Body of pancreas (tissue), 4 donors: ENCODE measurements at regions of chr5 and their contacts with region 1.

Region 1: GRCh38 chr5:78899922-78900362 is 85.2 kb downstream of the ARSB start:
- DNase-seq: peak; percentile 67 to 76 (median 72)
- ATAC-seq: peak; percentile 79
- H3K4me3 ChIP-seq: no peak overlapping the region
- H3K27ac ChIP-seq: no peak overlapping the region
- H3K4me1 ChIP-seq: peaks cover 3% of the 10 kb centered on the region
- H3K27me3 ChIP-seq: no peaks in the 10 kb centered on the region
- CTCF ChIP-seq: peak; percentile 64 to 89 (median 87)
- POLR2A ChIP-seq: no peak

Region 2: GRCh38 chr5:78964887-78965286 is 64.9 kb after region 1 on chr5:
- intact Hi-C with region 1: loop called (anchors 10 kb)
- DNase-seq: peak in 1 of 4 donors; percentile 42
- ATAC-seq: peak; percentile 75
- H3K4me3 ChIP-seq: no peak overlapping the region
- H3K27ac ChIP-seq: no peak overlapping the region
- H3K4me1 ChIP-seq: no peaks in the 10 kb centered on the region
- H3K27me3 ChIP-seq: no peaks in the 10 kb centered on the region
- CTCF ChIP-seq: peak in 6 of 7 experiments; percentile 23 to 77 (median 59)
- POLR2A ChIP-seq: no peak

Region 3: GRCh38 chr5:79050498-79050897 is 150.6 kb after region 1 on chr5:
- intact Hi-C with region 1: no loop called
- DNase-seq: no peak
- ATAC-seq: no peak
- H3K4me3 ChIP-seq: no peak overlapping the region
- H3K27ac ChIP-seq: no peak overlapping the region
- H3K4me1 ChIP-seq: no peaks in the 10 kb centered on the region
- H3K27me3 ChIP-seq: no peaks in the 10 kb centered on the region
- CTCF ChIP-seq: no peak
- POLR2A ChIP-seq: no peak